Mammary epithelial cell (primary cell): ENCODE measurements at regions of chr12 and their contacts with region 1.

Region 1: DNA sequence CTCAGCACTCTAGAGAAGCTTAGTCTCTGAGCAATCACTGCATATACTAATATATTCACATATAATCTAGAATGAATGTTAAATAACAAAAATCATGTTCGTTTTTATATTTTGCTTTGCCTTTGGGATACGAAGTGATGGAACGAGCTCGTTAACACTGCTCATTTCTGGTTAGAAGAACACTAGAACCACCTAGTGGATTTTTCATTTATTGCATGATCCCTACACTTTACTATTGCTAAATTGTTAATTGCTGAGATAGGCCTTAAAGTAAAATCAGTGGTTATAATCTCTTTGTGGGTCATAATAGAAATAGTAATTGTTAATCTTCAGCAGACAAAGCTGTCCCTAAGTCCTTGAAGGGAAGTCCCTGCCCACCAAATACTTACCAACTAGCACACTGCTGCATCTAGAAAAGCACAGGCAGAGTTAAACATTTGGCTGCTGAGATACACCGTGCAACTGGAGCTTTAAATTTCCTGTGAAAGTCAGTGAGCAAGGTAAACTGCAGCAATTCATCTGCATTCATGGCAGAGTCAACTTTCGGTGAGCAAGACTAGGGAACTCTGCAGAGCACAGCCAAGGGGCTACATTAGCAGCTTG is 353.7 kb downstream of the APAF1 start:
- DNase-seq: peak; percentile 26
- H3K4me3 ChIP-seq: no peak overlapping the region
- H3K27ac ChIP-seq: no peak overlapping the region
- H3K4me1 ChIP-seq: no peaks in the 10 kb centered on the region
- H3K27me3 ChIP-seq: no peaks in the 10 kb centered on the region
- CTCF ChIP-seq: peak; percentile 58 to 75

Region 2: DNA sequence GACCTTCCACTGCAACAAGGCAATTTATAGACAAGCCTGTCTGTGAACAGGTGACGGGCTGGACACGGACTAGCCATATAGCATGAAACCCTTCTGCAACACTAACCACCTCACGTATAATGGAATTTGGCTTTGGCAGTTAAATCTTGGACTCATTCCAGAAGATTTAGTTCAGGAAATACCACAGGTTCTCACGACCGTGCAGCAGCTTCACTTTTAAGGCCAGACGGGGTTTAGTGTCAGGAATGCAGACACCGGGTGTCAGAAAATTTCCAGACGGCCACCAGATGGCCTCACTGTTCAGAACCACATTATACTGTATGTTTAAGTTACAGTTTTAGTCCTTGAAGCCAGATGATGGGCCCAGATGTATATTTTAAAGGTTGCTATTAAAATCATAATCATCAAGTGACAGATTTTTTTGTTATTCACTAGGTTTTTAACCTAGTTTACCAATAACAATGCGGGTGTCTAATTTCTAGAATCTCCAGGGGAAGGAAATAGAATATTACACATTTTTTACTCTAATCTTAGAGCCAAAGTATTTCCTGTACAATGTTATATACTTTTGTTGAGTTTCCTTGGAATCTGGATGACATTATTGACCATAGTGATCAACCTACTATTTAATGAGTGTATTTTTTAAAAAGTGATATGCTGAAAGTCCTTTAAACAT is 573.9 kb before region 1 on chr12:
- CTCF ChIA-PET with region 1: no interaction called
- dilution Hi-C with region 1: no loop called
- in situ Hi-C with region 1: no loop called
- intact Hi-C with region 1: loop called (anchors 10 kb)
- DNase-seq: peak; percentile 69
- H3K4me3 ChIP-seq: no peak overlapping the region
- H3K27ac ChIP-seq: no peak overlapping the region
- H3K4me1 ChIP-seq: no peaks in the 10 kb centered on the region
- H3K27me3 ChIP-seq: no peaks in the 10 kb centered on the region
- CTCF ChIP-seq: peak; percentile 68 to 75

Region 3: GRCh38 chr12:98572010-98572409 is 426.8 kb before region 1 on chr12:
- CTCF ChIA-PET with region 1: interaction called, 3 read pairs
- dilution Hi-C with region 1: no loop called
- in situ Hi-C with region 1: no loop called
- intact Hi-C with region 1: loop called (anchors 5 kb)
- DNase-seq: no peak
- H3K4me3 ChIP-seq: no peak overlapping the region
- H3K27ac ChIP-seq: no peak overlapping the region
- H3K4me1 ChIP-seq: peaks cover 4% of the 10 kb centered on the region
- H3K27me3 ChIP-seq: no peaks in the 10 kb centered on the region
- CTCF ChIP-seq: peak in 1 of 2 donors; percentile 24

Region 4: GRCh38 chr12:98719515-98720504 is 279.0 kb before region 1 on chr12:
- CTCF ChIA-PET with region 1: no interaction called
- dilution Hi-C with region 1: no loop called
- in situ Hi-C with region 1: loop called in 1 of 2 experiments (anchors 25 kb)
- intact Hi-C with region 1: no loop called
- DNase-seq: no peak
- H3K4me3 ChIP-seq: no peak overlapping the region
- H3K27ac ChIP-seq: no peak overlapping the region
- H3K4me1 ChIP-seq: no peaks in the 10 kb centered on the region
- H3K27me3 ChIP-seq: no peaks in the 10 kb centered on the region
- CTCF ChIP-seq: no peak

Region 5: DNA sequence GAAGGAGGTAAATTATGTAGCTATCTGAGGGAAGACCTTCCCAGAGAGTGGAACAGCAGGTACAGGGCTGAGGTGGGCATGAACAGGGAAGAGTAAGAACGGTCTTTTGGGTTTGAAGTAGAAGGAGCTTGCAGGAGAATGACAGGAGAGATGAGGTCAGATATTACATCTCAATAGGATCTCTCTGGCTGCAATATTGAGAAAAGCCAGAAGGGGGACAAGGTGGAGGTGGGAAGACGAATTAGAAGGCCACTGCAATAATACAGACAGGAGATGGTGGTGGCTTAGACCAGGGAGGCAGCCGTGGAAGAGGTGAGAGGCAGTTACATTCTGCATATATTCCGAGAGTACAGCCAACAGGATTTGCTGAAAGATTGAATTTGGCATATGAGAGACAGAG is 43.5 kb before region 1 on chr12:
- CTCF ChIA-PET with region 1: no interaction called
- dilution Hi-C with region 1: no loop called
- in situ Hi-C with region 1: no loop called
- intact Hi-C with region 1: loop called (anchors 1 kb)
- DNase-seq: peak; percentile 36
- H3K4me3 ChIP-seq: no peak overlapping the region
- H3K27ac ChIP-seq: no peak overlapping the region
- H3K4me1 ChIP-seq: no peaks in the 10 kb centered on the region
- H3K27me3 ChIP-seq: no peaks in the 10 kb centered on the region
- CTCF ChIP-seq: peak; percentile 60 to 64